ENCODE measurements at regions of chr9 and their contacts with region 1.

Region 1: DNA sequence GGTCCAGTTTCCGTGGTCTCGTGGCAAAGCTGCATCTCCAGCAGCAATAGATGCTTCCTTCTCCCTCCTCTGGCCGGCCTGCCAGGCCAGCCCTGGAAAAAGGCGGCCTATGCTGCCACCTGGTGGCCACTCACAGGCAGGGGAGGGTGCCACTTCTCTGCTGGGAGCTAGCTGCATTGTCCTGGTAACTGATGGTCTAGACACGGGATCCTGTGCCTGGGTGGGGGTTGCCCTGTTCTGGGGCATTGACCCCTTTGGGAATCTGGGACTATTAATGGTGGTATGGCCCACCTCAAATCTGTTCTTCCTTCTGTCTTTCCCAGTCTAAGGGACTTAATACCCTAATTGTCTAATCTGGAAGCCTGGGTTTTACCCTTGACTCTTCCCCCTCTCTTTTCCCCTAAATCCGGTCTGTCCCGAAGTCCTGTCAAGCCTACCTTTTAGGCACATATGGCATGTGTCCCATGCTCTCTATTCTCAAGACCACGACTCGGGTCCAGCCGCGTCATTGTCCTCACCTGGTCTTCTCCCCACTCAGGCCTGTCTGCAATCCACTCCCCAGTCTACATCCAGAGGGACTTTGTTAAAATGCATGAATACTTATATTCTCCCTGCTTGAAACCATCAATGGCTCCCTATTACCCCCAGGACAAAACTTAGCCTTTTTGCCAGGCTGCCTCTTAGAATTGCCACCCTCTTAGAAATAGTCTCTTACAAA is 20.0 kb upstream of the PTGS1 start:
- DNase-seq: peak; percentile 90
- ATAC-seq: peak; percentile 77
- H3K4me3 Mint-ChIP-seq: no peak overlapping the region
- H3K27ac Mint-ChIP-seq: no peak overlapping the region
- H3K4me1 Mint-ChIP-seq: peaks cover 20% of the 10 kb centered on the region
- H3K27me3 Mint-ChIP-seq: peaks cover 34% of the 10 kb centered on the region
- CTCF ChIP-seq: peak; percentile 86

Region 2: DNA sequence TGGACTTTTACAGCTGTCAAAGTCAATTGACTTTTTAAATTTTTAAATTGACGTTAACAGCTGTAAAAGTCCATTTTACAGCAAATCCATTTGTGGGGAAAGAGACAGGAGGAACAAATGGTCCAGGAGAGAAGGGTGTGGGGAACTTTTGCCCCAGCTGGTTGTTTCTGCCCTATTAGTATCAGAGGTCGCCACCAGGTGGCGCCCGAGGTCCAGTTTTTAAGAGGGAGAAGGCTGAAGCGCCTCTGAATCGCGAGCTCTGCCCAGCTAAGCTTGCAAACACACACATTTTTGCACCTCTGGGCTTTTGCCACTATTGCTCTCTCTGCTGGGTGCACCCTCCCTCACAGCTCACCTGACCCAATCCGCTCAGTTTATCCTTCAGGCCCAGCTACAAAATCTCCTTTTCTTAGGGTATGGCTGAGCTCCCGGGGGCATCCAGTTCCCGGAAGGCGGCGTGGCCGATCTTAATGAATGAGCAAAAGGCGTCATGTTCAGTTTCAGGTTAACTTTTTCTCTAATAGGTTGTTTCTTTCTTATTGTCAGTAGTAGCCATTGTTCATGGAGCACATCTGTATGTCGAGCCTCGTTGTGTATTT is 251.4 kb before region 1 on chr9:
- CTCF ChIA-PET with region 1: interaction called, 91 read pairs
- POLR2A ChIA-PET with region 1: interaction called, 4 read pairs
- DNase-seq: peak; percentile 86
- ATAC-seq: peak; percentile 87
- H3K4me3 Mint-ChIP-seq: no peak overlapping the region
- H3K27ac Mint-ChIP-seq: no peak overlapping the region
- H3K4me1 Mint-ChIP-seq: peaks cover 13% of the 10 kb centered on the region
- H3K27me3 Mint-ChIP-seq: peaks cover 17% of the 10 kb centered on the region
- CTCF ChIP-seq: peak; percentile 94

Region 3: DNA sequence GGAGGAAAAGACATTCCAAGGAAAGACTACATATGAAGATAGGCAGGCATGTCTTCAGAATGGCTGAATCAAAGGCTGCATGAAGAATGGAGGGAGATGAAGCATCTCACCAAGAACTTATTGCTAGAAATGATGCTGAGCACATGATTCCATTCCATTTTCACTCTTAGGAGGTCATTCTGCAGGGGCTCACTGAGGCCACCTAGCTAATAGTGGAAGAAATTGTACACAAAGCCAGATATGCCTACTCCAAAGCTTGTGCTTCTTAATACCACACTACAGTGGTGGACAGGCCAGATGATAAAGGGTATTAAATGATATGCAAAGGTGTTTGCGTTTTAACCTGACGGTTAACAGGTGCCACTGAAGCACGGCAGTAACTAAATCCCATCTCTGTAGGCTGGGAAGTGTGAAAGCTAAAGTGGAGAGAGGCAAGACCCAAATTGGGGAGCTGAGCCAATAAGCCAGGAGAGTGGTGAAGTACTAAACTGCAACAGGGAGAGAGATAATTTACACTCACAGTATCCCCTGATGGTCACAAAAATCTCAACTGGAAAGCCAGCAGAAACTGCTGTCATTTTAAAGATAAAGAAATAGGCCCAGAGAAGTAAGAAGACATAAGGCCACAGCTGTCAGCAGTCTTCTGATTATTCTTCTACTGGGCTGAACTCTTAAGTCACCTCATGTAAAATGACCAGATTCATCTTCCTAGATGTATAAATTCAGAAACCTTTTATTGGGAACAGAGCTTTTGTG is 205.8 kb before region 1 on chr9:
- CTCF ChIA-PET with region 1: interaction called, 12 read pairs
- POLR2A ChIA-PET with region 1: no interaction called
- DNase-seq: no peak
- ATAC-seq: no peak; the same call in 1 of the 2 replicates
- H3K4me3 Mint-ChIP-seq: no peak overlapping the region
- H3K27ac Mint-ChIP-seq: no peak overlapping the region
- H3K4me1 Mint-ChIP-seq: no peaks in the 10 kb centered on the region
- H3K27me3 Mint-ChIP-seq: no peaks in the 10 kb centered on the region
- CTCF ChIP-seq: no peak

Region 4: DNA sequence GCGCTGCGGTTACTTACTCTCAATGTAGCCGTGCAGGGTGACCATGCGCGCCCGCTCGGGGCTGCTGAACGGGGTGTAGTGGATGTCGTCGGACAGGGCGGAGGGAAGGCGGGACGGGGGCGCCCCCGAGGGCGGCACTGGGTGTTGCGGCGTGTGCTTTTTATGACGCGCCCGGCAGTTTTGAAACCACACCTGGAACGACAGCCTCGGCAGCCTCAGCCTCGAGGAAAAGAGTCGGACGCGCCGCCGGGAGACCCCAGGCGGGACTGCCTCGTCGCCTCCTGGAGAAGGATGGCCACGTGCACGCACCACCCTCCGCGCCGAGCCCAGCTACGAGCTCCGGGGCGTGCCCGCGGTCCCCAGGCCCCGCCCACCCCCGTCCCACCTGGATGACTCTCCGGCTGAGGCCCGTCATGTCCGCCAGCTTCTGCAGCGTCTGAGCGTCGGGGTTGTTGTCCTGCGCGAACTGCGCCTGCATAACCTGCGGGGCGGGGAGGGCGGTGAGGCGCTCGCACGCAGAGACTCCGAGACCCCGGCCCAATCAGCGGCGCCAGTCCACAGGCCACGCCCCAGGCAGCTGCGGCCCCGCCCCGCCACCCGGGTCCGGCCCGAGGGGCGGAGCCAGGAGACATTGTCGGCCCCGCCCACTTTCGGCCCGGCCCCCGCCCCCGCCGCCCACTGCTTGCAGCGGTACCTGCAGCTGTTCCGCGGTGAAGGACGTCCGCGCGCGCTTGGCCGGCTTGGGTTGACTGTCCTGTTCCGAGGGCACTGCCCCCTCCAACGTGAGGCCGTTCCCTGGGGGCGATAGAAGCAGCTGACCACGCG is 137.0 kb before region 1 on chr9:
- CTCF ChIA-PET with region 1: interaction called, 11 read pairs
- POLR2A ChIA-PET with region 1: interaction called, 8 read pairs
- DNase-seq: peak; percentile 94
- ATAC-seq: peak; percentile 94
- H3K4me3 Mint-ChIP-seq: peak overlapping the region; percentile 70
- H3K27ac Mint-ChIP-seq: no peak overlapping the region
- H3K4me1 Mint-ChIP-seq: peaks cover 27% of the 10 kb centered on the region
- H3K27me3 Mint-ChIP-seq: peaks cover 89% of the 10 kb centered on the region
- CTCF ChIP-seq: no peak

Region 5: DNA sequence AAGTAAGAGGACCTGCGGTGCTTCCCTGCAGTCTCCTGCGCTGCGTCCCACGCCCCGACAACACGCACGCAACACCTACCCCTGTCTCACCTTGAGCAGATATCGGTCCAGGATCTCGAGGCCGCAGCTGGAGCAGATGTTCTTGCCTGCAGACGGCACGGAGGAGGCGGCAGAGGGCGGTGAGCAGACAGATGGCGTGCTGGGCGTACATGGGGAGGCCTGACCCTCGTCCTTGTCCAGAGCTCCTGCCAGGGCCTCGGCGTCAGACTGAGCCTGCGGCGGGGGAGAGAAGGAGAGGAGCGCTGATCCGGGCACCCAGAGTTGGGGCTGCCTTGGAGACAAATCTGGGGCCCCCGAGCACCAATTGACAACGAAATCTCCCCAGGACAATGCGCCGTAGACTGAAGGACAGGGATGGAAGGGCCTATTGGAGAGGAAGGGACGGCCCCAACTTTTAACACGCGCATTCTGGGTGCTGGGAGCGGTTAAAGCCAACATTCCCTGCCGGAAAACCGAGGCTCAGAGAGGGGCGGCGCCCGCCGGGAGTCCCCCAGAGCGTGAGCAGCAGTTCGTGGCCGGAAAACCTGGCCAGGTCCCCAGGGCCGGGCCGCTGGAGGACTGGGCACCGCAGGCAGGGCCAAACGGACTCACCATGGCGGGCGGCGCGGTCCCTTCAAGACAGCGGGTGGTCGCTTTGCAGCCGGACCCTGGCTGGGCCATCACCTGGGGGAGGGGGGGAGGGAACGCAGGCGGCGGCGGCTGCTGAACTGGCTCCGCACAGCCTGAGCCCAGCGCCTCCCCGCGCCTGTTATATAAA is 123.8 kb before region 1 on chr9:
- CTCF ChIA-PET with region 1: interaction called, 10 read pairs
- POLR2A ChIA-PET with region 1: no interaction called
- DNase-seq: peak; percentile 57
- ATAC-seq: peak; percentile 13
- H3K4me3 Mint-ChIP-seq: peak overlapping the region; percentile 68
- H3K27ac Mint-ChIP-seq: no peak overlapping the region
- H3K4me1 Mint-ChIP-seq: peaks cover 29% of the 10 kb centered on the region
- H3K27me3 Mint-ChIP-seq: peaks cover 65% of the 10 kb centered on the region
- CTCF ChIP-seq: no peak

Region 6: DNA sequence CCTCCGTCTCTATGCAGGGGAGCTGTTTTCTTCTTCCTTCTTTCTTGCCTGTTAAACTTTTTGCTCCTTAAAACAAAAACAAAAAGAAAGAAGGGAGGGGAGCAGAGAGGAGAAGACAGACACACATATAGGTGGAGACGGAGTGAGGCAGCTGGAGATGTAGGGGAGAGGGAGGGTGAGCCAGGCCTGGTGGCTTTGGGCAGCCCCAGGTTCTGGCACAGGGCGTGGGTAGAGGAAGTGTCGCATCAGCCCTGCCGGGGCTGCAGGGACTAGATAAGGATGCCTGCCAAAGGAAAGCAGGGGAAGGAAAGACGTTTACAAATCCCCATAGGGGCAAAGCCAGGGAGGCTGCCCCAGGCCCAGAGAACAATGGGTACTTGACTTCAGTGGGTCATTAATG is 18.7 kb before region 1 on chr9:
- CTCF ChIA-PET with region 1: interaction called, 39 read pairs
- POLR2A ChIA-PET with region 1: interaction called, 7 read pairs
- DNase-seq: no peak
- ATAC-seq: peak; percentile 11
- H3K4me3 Mint-ChIP-seq: no peak overlapping the region
- H3K27ac Mint-ChIP-seq: no peak overlapping the region; the same call in 1 of the 2 replicates
- H3K4me1 Mint-ChIP-seq: peaks cover 46% of the 10 kb centered on the region
- H3K27me3 Mint-ChIP-seq: no peaks in the 10 kb centered on the region
- CTCF ChIP-seq: no peak

Region 7: DNA sequence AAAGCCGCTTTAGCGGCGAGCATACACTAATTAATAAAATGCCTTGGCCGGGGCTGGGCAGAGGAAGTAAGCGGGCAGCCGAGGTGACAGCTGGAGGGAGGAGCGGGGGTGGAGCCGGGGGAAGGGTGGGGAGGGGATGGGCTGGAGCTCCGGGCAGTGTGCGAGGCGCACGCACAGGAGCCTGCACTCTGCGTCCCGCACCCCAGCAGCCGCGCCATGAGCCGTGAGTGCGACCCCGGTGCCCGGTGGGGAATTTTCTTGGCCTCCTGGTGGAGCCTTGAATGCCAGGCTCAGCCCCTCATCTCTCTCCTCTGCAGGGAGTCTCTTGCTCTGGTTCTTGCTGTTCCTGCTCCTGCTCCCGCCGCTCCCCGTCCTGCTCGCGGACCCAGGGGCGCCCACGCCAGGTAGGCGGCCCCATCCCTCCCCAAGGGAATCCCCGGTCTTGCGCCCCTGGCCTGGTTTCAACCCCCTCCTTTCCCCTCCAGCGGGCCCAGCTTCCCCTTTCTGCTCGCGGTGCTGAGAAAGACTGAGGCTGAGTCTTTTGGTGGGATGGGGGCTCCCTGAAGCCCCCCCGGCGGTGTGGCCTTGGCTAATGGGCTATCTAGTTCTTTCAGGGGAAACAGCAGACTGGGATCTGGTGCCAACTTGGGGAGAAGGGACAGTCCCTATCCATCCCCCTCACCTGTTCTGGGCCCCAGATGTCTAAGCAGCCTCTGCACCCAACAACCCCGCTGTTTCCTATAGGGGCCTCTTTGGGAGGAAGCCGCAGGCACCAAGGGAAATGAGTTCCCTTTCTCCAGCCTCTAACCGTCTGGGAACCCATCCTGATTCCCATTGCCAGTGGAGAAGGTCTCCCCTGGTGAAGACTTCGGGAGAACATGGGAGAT is 20.3 kb after region 1 on chr9 and contains the start of gene PTGS1:
- CTCF ChIA-PET with region 1: interaction called, 33 read pairs
- POLR2A ChIA-PET with region 1: no interaction called
- DNase-seq: peak; percentile 36
- ATAC-seq: peak; percentile 66
- H3K4me3 Mint-ChIP-seq: peak within 1 kb of the TSS; percentile 76
- H3K27ac Mint-ChIP-seq: no peak within 1 kb of the TSS
- H3K4me1 Mint-ChIP-seq: peaks cover 31% of the 10 kb centered on the region
- H3K27me3 Mint-ChIP-seq: peaks cover 76% of the 10 kb centered on the region
- CTCF ChIP-seq: no peak
- total RNA-seq, gene PTGS1: 0.89 to 1.1 TPM (median 1.0 TPM) in 3 replicates